Mammary epithelial cell (primary cell): ENCODE measurements at regions of chr15 and their contacts with region 1.

Region 1: DNA sequence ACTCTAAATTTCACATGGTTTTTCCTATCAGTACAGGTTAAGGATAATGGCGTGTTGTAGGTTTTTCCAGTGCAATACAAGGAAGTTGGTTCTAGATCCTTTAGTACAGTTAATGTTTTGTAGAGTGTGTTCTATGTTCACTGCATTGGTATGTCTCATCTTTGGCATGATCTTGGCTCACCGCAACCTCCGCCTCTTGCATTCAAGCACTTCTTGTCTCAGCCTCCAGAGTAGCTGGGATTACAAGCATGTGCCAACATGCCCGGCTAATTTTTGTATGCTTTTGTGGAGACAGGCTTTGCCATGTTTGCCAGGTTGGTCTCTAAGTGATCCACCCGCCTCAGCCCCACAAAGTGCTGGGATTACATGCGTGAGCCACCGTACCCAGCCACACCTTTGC is 30.4 kb downstream of the SNRPN start:
- DNase-seq: peak; percentile 49
- H3K4me3 ChIP-seq: no peak overlapping the region
- H3K27ac ChIP-seq: no peak overlapping the region
- H3K4me1 ChIP-seq: no peaks in the 10 kb centered on the region
- H3K27me3 ChIP-seq: no peaks in the 10 kb centered on the region
- CTCF ChIP-seq: no peak

Region 2: GRCh38 chr15:24761704-24762302 is 223.4 kb before region 1 on chr15:
- CTCF ChIA-PET with region 1: no interaction called
- dilution Hi-C with region 1: no loop called
- in situ Hi-C with region 1: no loop called
- intact Hi-C with region 1: no loop called
- DNase-seq: no peak
- H3K4me3 ChIP-seq: no peak overlapping the region
- H3K27ac ChIP-seq: no peak overlapping the region
- H3K4me1 ChIP-seq: no peaks in the 10 kb centered on the region
- H3K27me3 ChIP-seq: no peaks in the 10 kb centered on the region
- CTCF ChIP-seq: peak; percentile 18 to 38

Region 3: DNA sequence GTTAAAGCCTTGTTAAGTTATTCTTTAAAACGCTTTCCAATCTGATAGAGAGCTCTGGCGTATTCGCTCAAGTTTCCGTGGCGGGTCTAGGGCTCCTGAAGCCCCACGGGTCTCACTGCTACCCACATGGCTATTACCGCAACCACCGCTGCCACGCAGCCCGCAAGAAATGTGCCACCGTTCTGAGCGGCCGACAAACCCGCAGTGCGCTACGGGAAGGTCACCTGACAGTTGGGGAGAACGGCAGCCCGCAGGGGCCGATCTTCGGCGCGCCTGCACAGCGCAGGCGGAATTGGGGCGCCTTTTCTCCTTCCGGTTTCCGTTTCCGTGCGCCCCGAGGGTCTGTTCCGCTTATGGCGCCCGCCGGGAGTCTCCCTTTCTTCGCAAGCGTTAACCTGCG is 107.1 kb before region 1 on chr15:
- CTCF ChIA-PET with region 1: no interaction called
- dilution Hi-C with region 1: no loop called
- in situ Hi-C with region 1: loop called in 1 of 2 experiments (anchors 25 kb)
- intact Hi-C with region 1: no loop called
- DNase-seq: peak; percentile 1
- H3K4me3 ChIP-seq: peak overlapping the region; percentile 25 to 43 (median 31)
- H3K27ac ChIP-seq: no peak overlapping the region
- H3K4me1 ChIP-seq: no peaks in the 10 kb centered on the region
- H3K27me3 ChIP-seq: no peaks in the 10 kb centered on the region
- CTCF ChIP-seq: no peak

Region 4: DNA sequence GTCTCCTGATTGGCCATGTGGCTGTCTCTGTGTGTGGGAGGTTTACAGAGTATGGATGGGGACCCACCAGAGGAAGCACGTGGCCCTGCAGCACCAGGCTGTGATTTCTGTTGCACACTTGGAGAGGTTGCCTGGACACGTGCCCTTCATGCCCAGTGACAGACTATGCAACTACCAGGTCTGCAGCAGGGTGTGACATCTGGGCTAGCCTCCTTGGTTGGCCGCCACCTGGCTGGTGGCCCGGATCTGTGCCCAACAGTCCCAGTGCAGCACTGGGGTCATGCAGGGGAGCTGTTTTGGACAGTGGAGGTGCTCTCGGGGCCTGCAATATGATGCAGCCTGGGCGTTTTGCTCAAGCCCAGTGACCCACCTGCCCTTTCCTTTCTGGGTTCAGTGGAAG is 241.1 kb after region 1 on chr15:
- CTCF ChIA-PET with region 1: no interaction called
- dilution Hi-C with region 1: no loop called
- in situ Hi-C with region 1: no loop called
- intact Hi-C with region 1: no loop called
- DNase-seq: no peak
- H3K4me3 ChIP-seq: no peak overlapping the region
- H3K27ac ChIP-seq: no peak overlapping the region
- H3K4me1 ChIP-seq: no peaks in the 10 kb centered on the region
- H3K27me3 ChIP-seq: no peaks in the 10 kb centered on the region
- CTCF ChIP-seq: no peak

Region 5: DNA sequence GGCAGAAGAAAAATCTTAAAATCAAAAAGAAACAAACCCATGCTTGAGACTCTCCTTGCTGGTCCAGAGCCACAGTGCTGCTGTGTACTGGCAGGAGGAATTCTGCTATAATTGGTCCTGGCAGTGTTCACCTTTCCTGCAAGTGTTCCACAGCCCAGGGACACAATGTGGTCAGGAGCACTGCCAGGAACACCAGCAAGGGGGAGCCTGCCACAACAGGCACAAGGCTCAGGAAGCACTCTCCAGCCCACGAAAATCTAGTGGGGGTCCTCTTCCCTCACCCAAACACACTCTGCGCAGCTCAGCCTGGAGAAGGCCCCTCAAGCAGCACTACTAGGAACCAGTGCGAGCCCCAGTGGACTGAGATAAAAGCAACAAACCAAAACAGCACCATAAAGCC is 360.7 kb after region 1 on chr15:
- CTCF ChIA-PET with region 1: no interaction called
- dilution Hi-C with region 1: loop called (anchors 25 kb)
- in situ Hi-C with region 1: no loop called
- intact Hi-C with region 1: no loop called
- DNase-seq: peak; percentile 42
- H3K4me3 ChIP-seq: no peak overlapping the region
- H3K27ac ChIP-seq: no peak overlapping the region
- H3K4me1 ChIP-seq: peaks cover 11% of the 10 kb centered on the region
- H3K27me3 ChIP-seq: no peaks in the 10 kb centered on the region
- CTCF ChIP-seq: peak; percentile 9 to 68